Endothelial cell of umbilical vein (primary cell): ENCODE measurements at regions of chrX and their contacts with region 1.

Region 1: DNA sequence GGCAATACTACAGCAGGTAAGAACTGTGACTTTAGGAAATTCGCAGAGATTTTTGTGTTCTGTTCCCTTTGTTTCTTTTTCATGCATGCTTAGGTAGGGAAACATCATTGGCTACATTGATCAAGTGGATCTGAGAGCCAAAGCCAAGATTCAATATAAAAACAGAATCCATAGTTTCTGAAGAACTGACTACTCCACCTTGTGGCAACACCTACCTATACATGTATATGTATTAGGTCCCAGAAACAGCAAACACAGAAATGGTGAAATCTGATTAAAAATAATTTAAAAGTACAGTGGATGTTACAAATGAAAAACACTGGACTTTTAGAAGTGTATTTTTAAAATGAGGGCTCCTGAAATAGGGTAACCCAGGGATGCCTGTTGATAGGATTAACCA is 322.6 kb upstream of the MAOA start:
- DNase-seq: peak; percentile 19
- H3K4me3 ChIP-seq: no peak overlapping the region
- H3K27ac ChIP-seq: no peak overlapping the region
- H3K4me1 ChIP-seq: no peaks in the 10 kb centered on the region
- H3K27me3 ChIP-seq: no peaks in the 10 kb centered on the region
- CTCF ChIP-seq: no peak
- POLR2A ChIP-seq: no peak

Region 2: GRCh38 chrX:41781502-41781901 is 1552.0 kb before region 1 on chrX:
- CTCF ChIA-PET with region 1: interaction called, 6 read pairs
- POLR2A ChIA-PET with region 1: no interaction called
- dilution Hi-C with region 1: no loop called
- intact Hi-C with region 1: loop called (anchors 2 kb)
- DNase-seq: peak; percentile 49
- H3K4me3 ChIP-seq: no peak overlapping the region
- H3K27ac ChIP-seq: no peak overlapping the region
- H3K4me1 ChIP-seq: peaks cover 12% of the 10 kb centered on the region
- H3K27me3 ChIP-seq: no peaks in the 10 kb centered on the region
- CTCF ChIP-seq: peak; percentile 48 to 49
- POLR2A ChIP-seq: no peak